Left cardiac atrium (tissue), 4 donors: ENCODE measurements at regions of chr4 and their contacts with region 1.

Region 1: DNA sequence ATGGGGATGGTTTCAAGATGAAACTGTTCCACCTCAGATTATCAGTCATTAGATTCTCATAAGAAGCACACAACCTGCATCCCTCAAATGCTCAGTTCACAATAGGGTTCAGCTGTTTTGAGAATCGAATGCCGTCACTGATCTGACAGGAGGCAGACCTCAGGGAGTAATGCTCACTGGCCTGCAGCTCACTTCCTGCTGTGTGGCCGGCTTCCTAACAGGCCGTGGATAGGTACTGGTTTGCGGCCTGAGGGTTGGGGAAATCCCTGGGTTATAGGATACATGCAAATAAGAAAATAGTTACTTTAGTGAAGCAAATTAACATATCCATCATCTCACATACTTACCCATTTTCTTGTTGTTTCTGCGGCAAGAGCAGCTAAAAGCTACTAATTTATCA is 160.4 kb downstream of the MAD2L1 start:
- DNase-seq: no peak
- ATAC-seq: no peak

Region 2: GRCh38 chr4:119804407-119804806 is 101.9 kb before region 1 on chr4:
- intact Hi-C with region 1: loop called in 1 of 2 experiments (anchors 10 kb)
- DNase-seq: no peak
- ATAC-seq: no peak

Region 3: DNA sequence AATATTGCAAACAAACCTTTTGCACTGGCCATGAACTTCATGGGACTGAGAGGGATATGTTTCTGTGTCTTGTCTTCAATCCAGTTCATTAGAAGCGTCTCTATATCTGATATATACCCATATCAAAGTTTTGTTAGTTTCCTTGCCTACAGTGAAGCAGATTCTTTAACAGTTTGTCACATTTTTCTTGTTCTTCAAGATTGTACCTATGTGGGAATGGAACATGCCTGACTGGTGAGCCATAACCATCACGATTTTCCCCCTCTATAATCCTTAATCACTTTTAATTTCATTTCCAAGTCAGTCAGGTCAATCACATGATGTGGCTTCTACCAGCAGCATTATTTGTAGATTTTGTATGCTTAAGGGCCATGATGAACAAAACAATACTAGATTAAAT is 80.6 kb before region 1 on chr4:
- intact Hi-C with region 1: no loop called
- DNase-seq: no peak
- ATAC-seq: no peak